Breast epithelium (tissue), 4 donors: ENCODE measurements at regions of chr6 and their contacts with region 1.

Region 1: GRCh38 chr6:12803521-12803920 is 87.0 kb downstream of the PHACTR1 start:
- DNase-seq: no peak
- H3K4me3 ChIP-seq: no peak overlapping the region
- H3K27ac ChIP-seq: no peak overlapping the region
- H3K4me1 ChIP-seq: no peaks in the 10 kb centered on the region
- H3K27me3 ChIP-seq: no peaks in the 10 kb centered on the region
- CTCF ChIP-seq: no peak
- POLR2A ChIP-seq: no peak

Region 2: DNA sequence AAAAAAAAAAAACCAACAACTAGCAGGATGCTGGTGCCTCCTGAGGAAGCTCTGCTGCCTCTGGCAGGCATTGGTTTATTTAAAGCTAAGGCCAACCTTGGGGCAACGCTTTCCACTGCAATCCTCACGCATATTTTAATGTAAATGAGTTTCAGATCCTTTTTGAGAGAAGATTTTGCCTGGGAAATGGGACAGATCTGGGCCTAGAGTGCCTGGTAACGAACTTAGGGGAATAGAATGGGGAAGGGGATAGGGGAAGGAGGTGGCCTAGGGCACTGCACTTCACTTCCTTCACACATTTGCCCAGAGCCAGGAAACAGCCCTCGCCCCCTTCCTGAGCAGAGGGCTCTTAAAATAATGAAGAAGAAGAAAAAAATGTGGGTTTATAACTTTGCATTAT is 1398.7 kb before region 1 on chr6:
- intact Hi-C with region 1: no loop called
- DNase-seq: no peak
- H3K4me3 ChIP-seq: no peak overlapping the region
- H3K27ac ChIP-seq: no peak overlapping the region
- H3K4me1 ChIP-seq: no peaks in the 10 kb centered on the region
- H3K27me3 ChIP-seq: no peaks in the 10 kb centered on the region
- CTCF ChIP-seq: no peak
- POLR2A ChIP-seq: no peak

Region 3: GRCh38 chr6:12826584-12826983 is 23.1 kb after region 1 on chr6:
- intact Hi-C with region 1: loop called (anchors 1 kb)
- DNase-seq: no peak
- H3K4me3 ChIP-seq: no peak overlapping the region
- H3K27ac ChIP-seq: no peak overlapping the region
- H3K4me1 ChIP-seq: no peaks in the 10 kb centered on the region
- H3K27me3 ChIP-seq: no peaks in the 10 kb centered on the region
- CTCF ChIP-seq: no peak
- POLR2A ChIP-seq: no peak